ENCODE measurements at regions of chr11 and their contacts with region 1.

Region 1: GRCh38 chr11:94325681-94326080 is 21.3 kb downstream of the IZUMO1R start:
- DNase-seq: peak; percentile 61 to 94
- H3K4me3 ChIP-seq: no peak overlapping the region
- H3K27ac ChIP-seq: no peak overlapping the region
- H3K4me1 ChIP-seq: no peaks in the 10 kb centered on the region
- H3K27me3 ChIP-seq: peaks cover 0 to 1% (median 0%) of the 10 kb centered on the region in 4 experiments; a peak in 1 of 7 replicates
- CTCF ChIP-seq: peak; percentile 95 to 98 (median 97)
- EP300 ChIP-seq: no peak
- POLR2A ChIP-seq: no peak
- RAD21 ChIP-seq: peak; percentile 94 to 95

Region 2: DNA sequence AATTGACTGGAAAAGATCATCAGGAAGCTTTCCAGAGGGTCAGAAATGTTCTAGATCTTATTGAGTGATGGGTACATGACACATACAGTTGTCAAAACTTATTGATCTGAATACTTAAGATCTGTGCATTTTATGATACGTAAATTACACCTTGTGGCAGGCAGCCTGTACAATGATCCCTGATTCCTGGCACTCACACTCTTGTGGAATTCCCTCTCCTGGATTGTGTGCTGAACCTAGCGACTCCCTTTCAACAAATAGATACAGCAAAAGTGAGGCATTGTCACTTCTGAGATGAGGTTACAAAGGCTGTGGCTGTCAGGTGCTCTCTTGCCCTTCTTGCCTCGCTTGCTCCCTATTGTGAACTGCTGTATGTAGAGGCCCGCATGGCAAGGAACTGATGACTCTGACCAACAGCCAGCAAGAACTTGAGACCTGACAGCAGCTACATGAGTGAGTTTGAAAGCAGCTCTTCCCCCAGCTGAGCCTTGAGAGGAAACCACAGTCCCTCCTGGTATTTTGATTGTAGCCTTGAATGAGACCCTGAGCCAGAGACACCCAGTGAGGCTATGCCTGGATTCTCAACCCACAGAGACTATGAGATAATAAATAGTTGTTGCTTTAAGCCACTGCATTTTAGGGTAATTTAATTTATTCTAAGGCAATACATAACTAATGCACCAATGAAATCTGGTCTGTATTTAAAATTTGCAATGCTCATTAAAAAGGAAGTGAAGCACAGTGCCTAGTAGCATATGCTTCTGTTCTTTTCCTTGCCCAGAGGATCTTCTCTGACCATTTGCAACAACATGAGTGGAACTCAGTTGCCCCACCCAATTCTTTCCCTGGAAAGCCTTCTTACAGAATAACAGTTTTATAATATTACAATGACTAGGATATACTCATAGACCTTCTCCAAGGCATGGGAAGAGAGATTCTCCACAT is 81.8 kb before region 1 on chr11:
- CTCF ChIA-PET with region 1: no interaction called
- POLR2A ChIA-PET with region 1: no interaction called
- DNase-seq: no peak
- H3K4me3 ChIP-seq: no peak overlapping the region
- H3K27ac ChIP-seq: no peak overlapping the region
- H3K4me1 ChIP-seq: no peaks in the 10 kb centered on the region
- H3K27me3 ChIP-seq: no peaks in the 10 kb centered on the region
- CTCF ChIP-seq: no peak
- EP300 ChIP-seq: no peak
- POLR2A ChIP-seq: no peak
- RAD21 ChIP-seq: no peak

Region 3: DNA sequence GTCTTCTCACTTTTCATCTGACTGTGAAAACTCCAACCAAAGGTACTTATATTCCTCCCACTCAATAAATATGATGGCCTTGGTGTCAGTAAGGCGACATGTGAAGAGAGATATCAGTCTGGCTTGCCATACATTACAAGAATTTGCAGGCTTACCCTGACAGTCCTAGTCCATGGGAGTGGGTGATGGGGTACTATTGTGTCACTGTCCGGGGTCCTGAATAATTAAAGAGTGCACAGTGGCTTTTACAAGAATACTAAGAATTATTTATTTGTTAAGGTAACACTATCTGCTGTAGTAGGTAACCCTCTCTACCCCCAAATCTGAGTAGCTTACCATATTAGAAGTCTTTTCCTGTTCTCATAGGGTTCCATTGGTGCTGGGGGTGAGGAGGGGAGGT is 44.4 kb before region 1 on chr11:
- CTCF ChIA-PET with region 1: no interaction called
- POLR2A ChIA-PET with region 1: no interaction called
- DNase-seq: no peak
- H3K4me3 ChIP-seq: no peak overlapping the region
- H3K27ac ChIP-seq: no peak overlapping the region
- H3K4me1 ChIP-seq: peaks cover 0 to 3% (median 1%) of the 10 kb centered on the region in 4 experiments; a peak in 4 of 7 replicates
- H3K27me3 ChIP-seq: no peaks in the 10 kb centered on the region
- CTCF ChIP-seq: no peak
- EP300 ChIP-seq: no peak
- POLR2A ChIP-seq: no peak
- RAD21 ChIP-seq: no peak

Region 4: DNA sequence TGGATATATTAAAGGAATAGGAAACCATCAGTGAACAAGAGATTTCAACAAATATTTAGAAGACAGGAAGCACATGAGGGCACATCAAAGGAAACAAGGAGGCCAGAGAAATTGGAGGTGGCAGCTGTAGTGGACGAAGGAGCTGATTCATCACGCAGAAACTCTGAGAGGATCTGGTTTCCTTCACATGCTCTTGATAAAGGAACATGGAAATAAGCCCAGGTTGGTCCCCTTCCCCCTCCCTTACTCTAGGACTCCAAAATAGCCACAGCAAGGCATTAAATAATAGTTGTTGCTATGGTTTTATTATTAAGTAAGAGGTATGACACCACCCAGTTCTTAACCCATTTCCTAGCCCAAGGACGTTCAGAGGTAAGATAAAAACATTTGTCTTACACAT is 10.0 kb before region 1 on chr11:
- CTCF ChIA-PET with region 1: interaction called, 60 read pairs
- POLR2A ChIA-PET with region 1: no interaction called
- DNase-seq: no peak
- H3K4me3 ChIP-seq: no peak overlapping the region
- H3K27ac ChIP-seq: no peak overlapping the region
- H3K4me1 ChIP-seq: no peaks in the 10 kb centered on the region
- H3K27me3 ChIP-seq: no peaks in the 10 kb centered on the region
- CTCF ChIP-seq: no peak
- EP300 ChIP-seq: no peak
- POLR2A ChIP-seq: no peak
- RAD21 ChIP-seq: no peak

Region 5: GRCh38 chr11:94336033-94336432 is 10.4 kb after region 1 on chr11:
- CTCF ChIA-PET with region 1: interaction called, 11 read pairs
- POLR2A ChIA-PET with region 1: no interaction called
- DNase-seq: no peak
- H3K4me3 ChIP-seq: no peak overlapping the region
- H3K27ac ChIP-seq: no peak overlapping the region
- H3K4me1 ChIP-seq: no peaks in the 10 kb centered on the region
- H3K27me3 ChIP-seq: no peaks in the 10 kb centered on the region
- CTCF ChIP-seq: no peak
- EP300 ChIP-seq: no peak
- POLR2A ChIP-seq: no peak
- RAD21 ChIP-seq: no peak

Region 6: GRCh38 chr11:94417386-94417987 is 91.8 kb after region 1 on chr11:
- CTCF ChIA-PET with region 1: interaction called, 36 read pairs
- POLR2A ChIA-PET with region 1: interaction called, 3 read pairs
- DNase-seq: no peak
- H3K4me3 ChIP-seq: no peak overlapping the region
- H3K27ac ChIP-seq: no peak overlapping the region
- H3K4me1 ChIP-seq: no peaks in the 10 kb centered on the region
- H3K27me3 ChIP-seq: no peaks in the 10 kb centered on the region
- CTCF ChIP-seq: peak in 2 of 3 experiments; percentile 50 to 57; a peak in 3 of 4 replicates
- EP300 ChIP-seq: no peak
- POLR2A ChIP-seq: no peak
- RAD21 ChIP-seq: peak; percentile 70 to 74

Region 7: DNA sequence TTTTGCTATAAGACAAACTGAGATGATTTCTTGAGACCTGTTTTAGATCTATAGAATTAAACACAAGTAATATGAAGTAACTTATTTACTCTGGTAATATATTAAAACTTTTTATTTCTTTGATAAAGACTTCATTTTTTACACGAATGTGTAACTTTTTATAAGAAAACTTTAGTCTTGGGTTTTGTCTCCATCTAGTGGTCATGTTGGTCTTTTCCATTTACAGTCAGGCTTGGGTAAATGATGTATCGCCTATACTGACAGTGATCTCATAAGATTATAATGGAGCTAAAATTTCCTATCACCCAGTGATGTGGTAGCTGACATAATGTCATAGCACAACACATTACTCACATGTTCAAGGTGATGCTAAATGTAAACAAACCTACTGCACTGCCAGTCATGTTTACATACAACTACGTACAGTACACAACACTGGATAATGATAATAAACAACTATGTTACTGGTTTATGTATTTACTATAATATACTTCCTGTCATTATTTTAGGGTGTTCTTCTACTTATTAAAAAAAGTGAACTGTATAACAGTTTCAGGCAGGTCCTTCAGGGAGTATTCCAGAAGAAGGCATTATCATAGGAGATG is 179.1 kb after region 1 on chr11:
- CTCF ChIA-PET with region 1: interaction called, 16 read pairs
- POLR2A ChIA-PET with region 1: no interaction called
- DNase-seq: no peak
- H3K4me3 ChIP-seq: no peak overlapping the region
- H3K27ac ChIP-seq: no peak overlapping the region
- H3K4me1 ChIP-seq: no peaks in the 10 kb centered on the region
- H3K27me3 ChIP-seq: no peaks in the 10 kb centered on the region
- CTCF ChIP-seq: peak in 2 of 3 experiments; percentile 26 to 51; a peak in 2 of 4 replicates
- EP300 ChIP-seq: no peak
- POLR2A ChIP-seq: no peak
- RAD21 ChIP-seq: peak; percentile 68 to 71

Measured in H1 (cell line).